Gastrocnemius medialis (tissue), 4 donors: ENCODE measurements at regions of chr5 and their contacts with region 1.

Region 1: DNA sequence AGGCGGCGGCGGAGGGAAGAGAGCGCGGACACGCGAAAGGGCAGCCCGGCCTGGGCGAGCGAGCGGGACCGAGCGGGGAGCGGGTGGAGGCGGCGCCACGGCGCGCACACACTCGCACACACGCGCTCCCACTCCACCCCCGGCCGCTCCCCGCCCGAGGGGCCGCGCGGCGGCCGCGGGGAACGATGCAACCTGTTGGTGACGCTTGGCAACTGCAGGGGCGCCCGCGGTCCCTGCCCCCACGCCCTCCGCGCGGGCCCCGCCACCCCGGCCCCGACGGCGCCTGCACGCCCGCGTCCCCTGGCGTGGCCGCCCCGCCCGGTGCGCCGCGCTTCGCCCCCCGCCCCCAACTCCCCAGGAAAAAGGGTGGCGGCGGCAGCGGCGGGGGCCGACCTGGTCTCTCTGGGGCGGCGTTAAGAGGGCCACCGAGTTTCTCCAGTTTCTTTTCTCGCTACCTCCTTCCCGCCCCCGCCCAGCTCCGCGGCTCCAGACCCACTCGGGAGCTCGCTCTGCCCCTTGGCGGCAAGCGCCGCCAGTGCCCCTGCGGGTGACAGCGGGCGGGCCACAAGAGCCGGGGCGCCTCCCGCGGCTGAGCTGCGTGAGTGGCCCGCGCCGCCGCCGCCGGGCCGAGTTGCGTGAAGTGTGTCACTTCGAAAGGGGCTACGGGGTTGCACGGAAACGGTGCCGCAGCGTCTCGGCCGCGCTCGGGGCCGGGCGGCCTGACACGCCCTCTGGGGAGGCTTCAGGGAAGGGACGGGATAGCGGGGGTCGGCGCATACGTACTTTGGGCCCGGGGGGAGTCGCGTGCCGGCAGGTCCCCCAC is at the start of gene NR3C1:
- DNase-seq: peak; percentile 82 to 88
- ATAC-seq: peak; percentile 56 to 58
- H3K4me3 ChIP-seq: peak within 1 kb of the TSS; percentile 80 to 92 (median 86)
- H3K27ac ChIP-seq: peak within 1 kb of the TSS; percentile 99 to 100 (median 99)
- H3K4me1 ChIP-seq: peaks cover 11 to 21% of the 10 kb centered on the region in 2 donors
- H3K27me3 ChIP-seq: no peaks in the 10 kb centered on the region
- CTCF ChIP-seq: peak; percentile 37 to 79 (median 75)
- POLR2A ChIP-seq: peak; percentile 77 to 85
- total RNA-seq, gene NR3C1: 56.7 to 79.1 (median 64.4) TPM

Region 2: GRCh38 chr5:142922223-142922952 is 481.4 kb before region 1 on chr5:
- in situ Hi-C with region 1: loop called in 2 of 4 experiments (anchors 10 kb)
- intact Hi-C with region 1: loop called (anchors 5 kb)
- DNase-seq: no peak
- ATAC-seq: peak; percentile 58 to 76
- H3K4me3 ChIP-seq: no peak overlapping the region
- H3K27ac ChIP-seq: peak overlapping the region in 3 of 4 donors; percentile 12 to 22 (median 13)
- H3K4me1 ChIP-seq: peaks cover 8 to 24% of the 10 kb centered on the region in 2 donors
- H3K27me3 ChIP-seq: no peaks in the 10 kb centered on the region
- CTCF ChIP-seq: peak in 4 of 5 experiments; percentile 35 to 57 (median 48)
- POLR2A ChIP-seq: no peak

Region 3: DNA sequence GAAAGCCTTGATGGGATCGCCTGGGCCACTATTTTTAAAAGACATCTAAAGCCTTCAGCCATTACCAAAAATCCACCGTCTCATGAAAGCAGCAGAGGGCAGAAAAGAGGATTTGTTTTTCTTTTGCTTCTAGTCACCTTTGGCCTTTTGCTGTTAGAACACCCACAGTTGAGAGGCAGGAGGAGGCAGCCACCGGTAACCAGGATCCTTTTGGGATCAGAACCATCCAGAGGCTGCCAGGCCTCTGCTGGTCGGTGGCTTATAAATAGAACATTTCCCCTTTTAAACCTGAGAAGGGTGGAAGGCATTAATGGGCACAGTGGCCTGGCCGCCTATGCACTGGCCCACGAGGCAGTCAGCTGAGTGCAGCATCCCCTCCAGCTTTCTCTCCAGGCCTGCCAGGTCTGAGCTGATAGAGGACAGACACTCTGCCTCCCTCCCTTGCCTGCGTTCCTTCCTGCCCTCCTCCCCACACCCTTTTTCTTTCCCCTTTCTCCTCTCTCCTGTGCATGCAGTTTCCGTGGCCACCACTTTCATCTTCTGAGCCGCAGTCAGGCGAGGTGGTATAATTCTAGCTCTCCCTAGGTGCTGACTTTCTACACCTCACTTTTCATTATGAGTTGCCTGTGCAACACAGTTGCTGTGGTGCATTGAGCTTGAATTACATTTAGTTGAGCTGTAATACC is 380.2 kb before region 1 on chr5:
- in situ Hi-C with region 1: loop called in 2 of 4 experiments (anchors 10 to 25 kb)
- intact Hi-C with region 1: loop called (anchors 2 kb)
- DNase-seq: peak; percentile 91 to 97
- ATAC-seq: peak; percentile 88 to 89
- H3K4me3 ChIP-seq: peak overlapping the region in 1 of 4 donors; percentile 33
- H3K27ac ChIP-seq: peak overlapping the region; percentile 84 to 97 (median 90)
- H3K4me1 ChIP-seq: peaks cover 41 to 49% of the 10 kb centered on the region in 2 donors
- H3K27me3 ChIP-seq: no peaks in the 10 kb centered on the region
- CTCF ChIP-seq: peak in 2 of 5 experiments; percentile 9 to 16
- POLR2A ChIP-seq: peak; percentile 58 to 76

Region 4: GRCh38 chr5:143057580-143057999 is 346.2 kb before region 1 on chr5:
- in situ Hi-C with region 1: no loop called
- intact Hi-C with region 1: loop called (anchors 2 kb)
- DNase-seq: peak in 1 of 2 donors; percentile 67
- ATAC-seq: peak; percentile 47 to 76
- H3K4me3 ChIP-seq: peak overlapping the region in 3 of 4 donors; percentile 0 to 15 (median 10)
- H3K27ac ChIP-seq: peak overlapping the region; percentile 86 to 91 (median 88)
- H3K4me1 ChIP-seq: peaks cover 93 to 97% of the 10 kb centered on the region in 2 donors
- H3K27me3 ChIP-seq: no peaks in the 10 kb centered on the region
- CTCF ChIP-seq: no peak
- POLR2A ChIP-seq: no peak

Region 5: DNA sequence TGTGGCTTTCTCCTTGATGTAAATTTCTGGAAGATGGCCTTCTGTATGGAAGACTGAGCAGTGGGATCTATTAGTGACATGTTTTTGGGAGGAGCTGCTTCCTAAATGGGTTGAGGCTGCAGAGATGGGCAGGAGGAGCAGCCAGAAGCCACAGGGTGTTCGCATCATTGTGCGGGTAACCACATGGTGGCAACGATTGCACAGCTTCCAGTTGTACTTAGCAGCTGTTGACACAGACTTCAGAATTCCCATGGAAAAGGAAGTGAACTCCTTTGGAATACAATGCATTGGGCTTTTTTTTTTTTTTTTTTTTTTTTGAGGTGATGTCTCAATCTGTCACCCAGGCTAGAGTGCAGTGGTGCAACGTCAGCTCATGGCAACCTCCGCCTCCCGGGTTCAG is 297.6 kb before region 1 on chr5:
- in situ Hi-C with region 1: no loop called
- intact Hi-C with region 1: no loop called
- DNase-seq: peak in 1 of 2 donors; percentile 52
- ATAC-seq: peak; percentile 79 to 81
- H3K4me3 ChIP-seq: no peak overlapping the region
- H3K27ac ChIP-seq: no peak overlapping the region
- H3K4me1 ChIP-seq: peaks cover 35 to 55% of the 10 kb centered on the region in 2 donors
- H3K27me3 ChIP-seq: no peaks in the 10 kb centered on the region
- CTCF ChIP-seq: peak in 2 of 5 experiments; percentile 10 to 29
- POLR2A ChIP-seq: no peak

Region 6: DNA sequence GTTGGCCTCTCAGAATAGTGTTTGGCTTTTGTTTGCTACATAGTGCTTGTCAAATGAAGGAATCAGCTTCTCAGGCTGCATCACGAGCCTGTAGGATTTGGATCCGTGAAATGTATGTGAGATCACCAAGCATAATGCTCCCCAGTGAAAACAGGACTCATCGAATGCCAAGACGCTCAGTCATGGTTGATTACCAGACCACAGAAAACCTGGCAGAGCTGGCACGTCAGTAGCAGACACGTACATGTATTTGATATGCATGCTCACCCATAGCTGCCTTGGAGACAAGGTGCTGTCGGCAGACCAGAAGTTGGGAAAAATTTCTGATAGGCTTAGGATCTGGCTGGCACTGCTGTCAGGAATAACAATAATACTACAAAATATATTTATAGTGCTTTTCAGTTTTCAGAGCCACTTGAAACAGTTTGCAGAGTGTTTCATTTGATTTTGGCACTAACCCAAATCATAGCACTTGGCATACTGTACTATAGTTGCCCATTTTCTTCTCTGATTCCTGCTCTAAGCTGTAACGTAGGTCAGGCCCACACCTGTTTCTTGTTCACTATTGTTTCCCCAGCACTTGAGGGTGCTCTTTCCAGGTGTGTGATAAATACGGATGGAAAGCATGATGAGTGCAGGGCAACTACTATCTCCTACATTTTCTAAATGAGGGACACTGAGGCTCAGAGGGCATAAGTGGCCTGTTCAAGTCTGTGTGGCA is 226.4 kb before region 1 on chr5:
- in situ Hi-C with region 1: no loop called
- intact Hi-C with region 1: loop called (anchors 5 kb)
- DNase-seq: peak; percentile 76 to 84
- ATAC-seq: peak; percentile 71 to 85
- H3K4me3 ChIP-seq: no peak overlapping the region
- H3K27ac ChIP-seq: peak overlapping the region; percentile 68 to 84 (median 81)
- H3K4me1 ChIP-seq: peaks cover 41 to 48% of the 10 kb centered on the region in 2 donors
- H3K27me3 ChIP-seq: no peaks in the 10 kb centered on the region
- CTCF ChIP-seq: no peak
- POLR2A ChIP-seq: peak; percentile 19 to 39

Region 7: DNA sequence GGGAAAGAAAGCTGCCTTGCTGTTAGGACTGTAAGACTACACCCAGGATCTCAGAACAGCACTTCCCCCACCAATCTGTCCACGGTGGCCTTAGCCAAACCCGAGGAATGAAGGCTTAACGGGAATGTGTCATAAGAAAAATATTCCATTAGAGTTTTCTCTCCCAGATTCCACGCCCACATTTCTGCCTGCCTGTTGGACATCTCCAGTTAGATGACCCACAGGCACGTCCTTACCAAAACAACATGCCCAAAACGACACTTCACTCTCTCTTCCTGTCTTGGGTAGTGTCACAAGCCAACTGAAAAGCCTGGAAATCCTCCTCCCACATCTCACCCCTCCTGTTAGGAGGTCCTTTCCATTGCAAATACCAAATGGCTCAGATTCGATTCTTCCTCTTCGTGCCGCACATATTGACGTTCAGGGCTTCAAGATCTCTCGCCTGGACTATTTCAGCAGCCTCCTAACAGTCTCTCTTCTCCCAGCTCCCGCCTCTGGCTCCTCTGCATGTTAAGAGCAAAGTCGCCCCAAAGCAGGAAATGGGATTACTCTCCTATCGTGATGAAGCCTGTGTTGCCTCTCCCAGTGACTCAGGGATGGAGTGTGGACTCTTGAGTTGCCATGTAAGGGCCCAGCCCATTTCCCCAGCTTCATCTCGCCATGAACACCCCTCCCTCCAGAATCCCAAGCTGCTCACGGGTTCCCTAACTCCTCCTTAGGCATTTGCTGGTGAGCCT is 159.6 kb before region 1 on chr5:
- in situ Hi-C with region 1: loop called in 1 of 4 experiments (anchors 10 kb)
- intact Hi-C with region 1: loop called (anchors 2 kb)
- DNase-seq: peak; percentile 81 to 85
- ATAC-seq: peak; percentile 70 to 75
- H3K4me3 ChIP-seq: peak overlapping the region; percentile 2 to 45 (median 8)
- H3K27ac ChIP-seq: peak overlapping the region; percentile 85 to 95 (median 92)
- H3K4me1 ChIP-seq: peaks cover 39 to 49% of the 10 kb centered on the region in 2 donors
- H3K27me3 ChIP-seq: no peaks in the 10 kb centered on the region
- CTCF ChIP-seq: no peak
- POLR2A ChIP-seq: no peak

Region 8: GRCh38 chr5:143824851-143825720 is 421.3 kb after region 1 on chr5:
- in situ Hi-C with region 1: loop called in 1 of 4 experiments (anchors 10 kb)
- intact Hi-C with region 1: loop called (anchors 2 kb)
- DNase-seq: peak; percentile 60 to 73
- ATAC-seq: peak; percentile 87 to 97
- H3K4me3 ChIP-seq: peak overlapping the region in 1 of 4 donors; percentile 9
- H3K27ac ChIP-seq: no peak overlapping the region
- H3K4me1 ChIP-seq: peaks cover 0 to 10% of the 10 kb centered on the region in 2 donors
- H3K27me3 ChIP-seq: no peaks in the 10 kb centered on the region
- CTCF ChIP-seq: peak; percentile 83 to 96 (median 93)
- POLR2A ChIP-seq: no peak